Heart left ventricle (tissue), 16 donors: ENCODE measurements at regions of chr5 and their contacts with region 1.

Region 1: DNA sequence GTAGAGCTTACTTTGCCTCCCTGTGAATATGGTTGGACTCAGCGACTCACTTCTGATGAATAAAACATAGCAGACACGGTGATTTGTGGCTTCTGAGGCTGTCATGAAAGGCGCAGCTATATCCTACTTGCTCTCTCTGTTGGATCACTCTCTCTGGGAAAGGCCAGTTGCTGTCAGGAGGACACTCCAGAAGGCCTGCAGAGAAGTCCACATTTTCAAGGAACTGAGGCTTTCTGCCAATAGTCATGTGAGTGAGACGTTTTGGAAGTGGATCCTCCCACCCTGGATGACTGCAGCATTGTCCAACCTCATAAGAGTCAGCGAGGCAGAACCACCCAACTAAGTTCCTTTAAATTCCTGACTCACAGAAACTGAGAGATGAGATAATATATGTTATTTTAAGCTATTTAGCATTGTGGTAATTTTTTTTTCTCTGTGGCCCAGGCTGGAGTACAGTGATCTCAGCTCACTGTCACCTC is 156.0 kb upstream of the MAST4 start:
- DNase-seq: peak in 4 of 5 donors; percentile 56 to 68 (median 64)
- ATAC-seq: peak; percentile 80 to 90 (median 86)
- H3K4me3 ChIP-seq: peak overlapping the region; percentile 21 to 61 (median 52)
- H3K27ac ChIP-seq: peak overlapping the region; percentile 28 to 85 (median 76)
- H3K4me1 ChIP-seq: peaks cover 0 to 20% (median 4%) of the 10 kb centered on the region in 12 donors
- H3K27me3 ChIP-seq: no peaks in the 10 kb centered on the region
- CTCF ChIP-seq: no peak
- POLR2A ChIP-seq: peak in 1 of 2 donors; percentile 73

Region 2: GRCh38 chr5:65938256-65938655 is 502.0 kb before region 1 on chr5:
- intact Hi-C with region 1: no loop called
- DNase-seq: no peak
- ATAC-seq: no peak
- H3K4me3 ChIP-seq: no peak overlapping the region
- H3K27ac ChIP-seq: no peak overlapping the region
- H3K4me1 ChIP-seq: peaks cover 0 to 40% (median 28%) of the 10 kb centered on the region in 12 donors
- H3K27me3 ChIP-seq: no peaks in the 10 kb centered on the region
- CTCF ChIP-seq: no peak
- POLR2A ChIP-seq: no peak

Region 3: GRCh38 chr5:66324357-66324756 is 115.9 kb before region 1 on chr5:
- intact Hi-C with region 1: loop called in 6 of 10 experiments (anchors 5 to 10 kb)
- DNase-seq: peak; percentile 66 to 89 (median 73)
- ATAC-seq: peak; percentile 81 to 90 (median 86)
- H3K4me3 ChIP-seq: no peak overlapping the region
- H3K27ac ChIP-seq: peak overlapping the region; percentile 46 to 87 (median 80)
- H3K4me1 ChIP-seq: peaks cover 0 to 41% (median 6%) of the 10 kb centered on the region in 12 donors
- H3K27me3 ChIP-seq: no peaks in the 10 kb centered on the region
- CTCF ChIP-seq: peak in 1 of 12 donors; percentile 4
- POLR2A ChIP-seq: no peak

Region 4: DNA sequence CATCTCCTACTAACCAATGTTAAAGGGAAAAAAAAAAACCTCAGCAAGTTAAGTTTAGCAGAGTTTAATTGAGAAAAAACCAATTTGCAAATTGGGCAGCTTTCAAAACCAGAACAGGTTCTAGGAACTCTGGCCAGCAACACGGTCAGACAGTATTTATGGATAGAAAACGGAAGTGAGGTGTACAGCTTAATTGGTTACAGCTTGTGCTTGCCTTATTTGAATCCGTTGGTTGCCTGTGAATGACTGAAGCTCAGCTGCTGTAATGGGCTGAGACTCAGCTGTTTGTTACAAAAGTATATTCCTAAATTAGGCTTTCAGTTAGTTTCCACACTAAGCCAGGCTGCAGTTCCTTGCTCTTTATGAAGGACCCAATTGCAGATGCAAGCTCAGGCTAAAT is 79.2 kb before region 1 on chr5:
- intact Hi-C with region 1: loop called in 4 of 10 experiments (anchors 5 to 10 kb)
- DNase-seq: no peak
- ATAC-seq: peak in 2 of 4 donors; percentile 43 to 46
- H3K4me3 ChIP-seq: no peak overlapping the region
- H3K27ac ChIP-seq: peak overlapping the region in 9 of 12 donors; percentile 72 to 91 (median 87)
- H3K4me1 ChIP-seq: peaks cover 0 to 66% (median 23%) of the 10 kb centered on the region in 12 donors
- H3K27me3 ChIP-seq: no peaks in the 10 kb centered on the region
- CTCF ChIP-seq: no peak
- POLR2A ChIP-seq: no peak

Region 5: GRCh38 chr5:66367814-66368541 is 72.3 kb before region 1 on chr5:
- intact Hi-C with region 1: loop called in 4 of 10 experiments (anchors 5 to 10 kb)
- DNase-seq: peak in 4 of 5 donors; percentile 31 to 73 (median 56)
- ATAC-seq: peak; percentile 87 to 93 (median 90)
- H3K4me3 ChIP-seq: no peak overlapping the region
- H3K27ac ChIP-seq: peak overlapping the region; percentile 66 to 96 (median 84)
- H3K4me1 ChIP-seq: peaks cover 0 to 79% (median 20%) of the 10 kb centered on the region in 12 donors
- H3K27me3 ChIP-seq: no peaks in the 10 kb centered on the region
- CTCF ChIP-seq: no peak
- POLR2A ChIP-seq: no peak

Region 6: GRCh38 chr5:66511491-66511890 is 71.2 kb after region 1 on chr5:
- intact Hi-C with region 1: no loop called
- DNase-seq: no peak
- ATAC-seq: no peak
- H3K4me3 ChIP-seq: no peak overlapping the region
- H3K27ac ChIP-seq: no peak overlapping the region
- H3K4me1 ChIP-seq: no peaks in the 10 kb centered on the region
- H3K27me3 ChIP-seq: no peaks in the 10 kb centered on the region
- CTCF ChIP-seq: no peak
- POLR2A ChIP-seq: no peak

Region 7: DNA sequence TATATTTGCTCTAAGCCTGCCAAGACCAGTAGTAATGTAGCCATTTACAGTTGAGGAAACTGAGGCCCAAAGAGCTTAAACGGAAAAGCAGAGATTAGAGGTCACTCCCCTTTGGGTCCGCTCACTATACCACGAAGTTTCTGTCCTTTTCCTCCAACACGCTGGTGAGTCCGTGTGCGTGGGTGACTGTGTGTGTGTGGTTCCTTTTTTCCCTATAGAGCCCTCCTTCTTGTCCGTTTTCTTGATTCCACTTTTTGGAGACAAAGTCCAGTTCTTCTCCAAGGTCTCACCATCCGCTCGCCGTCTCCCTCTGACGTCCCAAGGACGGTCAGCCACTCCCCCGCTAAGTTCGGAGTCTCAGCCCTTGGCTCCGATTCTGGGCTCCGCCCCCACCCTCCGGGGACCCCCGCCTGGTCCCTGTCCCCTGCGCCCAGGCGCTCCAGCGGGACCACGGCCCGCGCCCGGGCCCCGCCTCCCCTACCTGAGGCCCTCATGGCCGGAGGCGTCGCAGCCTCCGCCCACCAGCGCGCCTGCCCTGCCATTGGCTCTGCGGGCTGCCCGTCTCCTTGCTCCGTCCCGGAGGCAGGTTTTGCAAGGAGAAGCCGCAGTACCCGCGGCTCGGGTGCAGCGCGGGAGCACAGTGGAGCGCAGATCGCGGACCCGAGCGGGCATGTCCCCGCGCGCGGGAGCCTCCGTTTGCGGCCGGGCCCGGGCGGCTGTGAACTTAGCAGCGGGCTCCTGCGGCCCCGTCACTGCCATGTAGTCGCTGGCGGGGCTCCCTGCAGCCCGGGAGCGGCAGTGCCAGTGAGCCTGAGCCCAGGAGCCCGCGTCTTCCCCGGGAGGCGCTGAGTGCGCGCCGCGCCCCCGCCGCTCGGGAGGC is 155.8 kb after region 1 on chr5 and contains the start of gene MAST4:
- intact Hi-C with region 1: loop called in 1 of 10 experiments (anchors 2 kb)
- DNase-seq: peak; percentile 92 to 95 (median 94)
- ATAC-seq: peak; percentile 93 to 97 (median 95)
- H3K4me3 ChIP-seq: peak within 1 kb of the TSS; percentile 69 to 97 (median 82)
- H3K27ac ChIP-seq: peak within 1 kb of the TSS; percentile 41 to 88 (median 71)
- H3K4me1 ChIP-seq: peaks cover 0 to 36% (median 12%) of the 10 kb centered on the region in 12 donors
- H3K27me3 ChIP-seq: peaks cover 0 to 41% (median 0%) of the 10 kb centered on the region in 9 donors
- CTCF ChIP-seq: no peak
- POLR2A ChIP-seq: peak; percentile 89 to 97
- total RNA-seq, gene MAST4: 54.9 to 96.2 (median 70.0) TPM